Right ventricle myocardium inferior (tissue), 1 donor: ENCODE measurements at regions of chr19 and their contacts with region 1.

Region 1: DNA sequence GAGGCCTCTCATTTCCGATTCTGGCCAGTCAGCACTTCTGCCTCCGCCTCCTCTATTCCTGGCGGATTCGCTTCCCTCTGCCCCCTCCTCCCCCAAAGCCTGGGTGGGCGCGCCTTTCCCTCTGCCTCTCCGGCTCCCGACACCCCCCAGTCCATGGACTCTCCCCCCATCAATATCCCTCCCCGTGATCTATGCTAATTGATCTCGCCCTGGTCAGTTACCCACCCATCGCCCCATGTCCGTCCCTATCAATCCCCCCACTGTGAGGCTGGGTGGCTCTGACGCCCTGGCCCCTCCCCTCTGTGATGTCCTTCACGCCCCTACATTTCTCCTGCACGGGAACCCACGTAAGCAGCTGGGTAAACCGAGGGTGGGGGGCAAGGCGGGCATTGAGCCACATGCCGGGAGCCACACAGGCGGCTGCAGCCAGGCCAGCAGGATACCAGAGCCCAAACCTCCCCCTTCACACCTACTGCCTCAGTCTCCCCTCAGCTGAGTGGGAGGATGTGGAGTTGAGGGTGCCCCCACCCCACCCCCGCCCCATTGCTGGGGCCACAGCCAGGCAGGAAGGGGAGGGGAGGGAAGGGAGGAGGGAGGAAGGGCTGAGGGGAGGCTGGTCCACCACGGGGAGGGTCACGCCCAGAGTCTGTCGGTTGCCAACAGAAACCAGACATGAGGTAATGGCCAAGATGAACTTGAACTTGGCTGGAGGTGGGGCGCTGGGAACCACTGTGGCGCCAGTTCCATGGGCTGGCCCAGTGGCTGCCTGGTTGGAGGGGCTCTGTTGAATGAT is 21.0 kb downstream of the SMIM24 start:
- DNase-seq: peak; percentile 89
- ATAC-seq: peak; percentile 87

Region 2: GRCh38 chr19:3434712-3435553 is 24.4 kb before region 1 on chr19:
- intact Hi-C with region 1: loop called (anchors 2 kb)
- DNase-seq: peak; percentile 98
- ATAC-seq: peak; percentile 94